ENCODE measurements at regions of chrX and their contacts with region 1.

Region 1: GRCh38 chrX:39149761-39150160 is 348.5 kb downstream of the MID1IP1 start:
- DNase-seq: peak; percentile 62 to 72 (median 71)
- H3K4me3 ChIP-seq: no peak overlapping the region
- H3K4me3 Mint-ChIP-seq: no peak overlapping the region
- H3K27ac ChIP-seq: no peak overlapping the region
- H3K27ac Mint-ChIP-seq: peak overlapping the region in 5 of 7 donors; percentile 2 to 88 (median 68)
- H3K4me1 ChIP-seq: peaks cover 22 to 24% of the 10 kb centered on the region in 2 donors
- H3K4me1 Mint-ChIP-seq: peaks cover 27% of the 10 kb centered on the region
- H3K27me3 ChIP-seq: no peaks in the 10 kb centered on the region
- H3K27me3 Mint-ChIP-seq: peaks cover 0 to 6% (median 3%) of the 10 kb centered on the region in 3 donors
- CTCF ChIP-seq: peak; percentile 73

Region 2: DNA sequence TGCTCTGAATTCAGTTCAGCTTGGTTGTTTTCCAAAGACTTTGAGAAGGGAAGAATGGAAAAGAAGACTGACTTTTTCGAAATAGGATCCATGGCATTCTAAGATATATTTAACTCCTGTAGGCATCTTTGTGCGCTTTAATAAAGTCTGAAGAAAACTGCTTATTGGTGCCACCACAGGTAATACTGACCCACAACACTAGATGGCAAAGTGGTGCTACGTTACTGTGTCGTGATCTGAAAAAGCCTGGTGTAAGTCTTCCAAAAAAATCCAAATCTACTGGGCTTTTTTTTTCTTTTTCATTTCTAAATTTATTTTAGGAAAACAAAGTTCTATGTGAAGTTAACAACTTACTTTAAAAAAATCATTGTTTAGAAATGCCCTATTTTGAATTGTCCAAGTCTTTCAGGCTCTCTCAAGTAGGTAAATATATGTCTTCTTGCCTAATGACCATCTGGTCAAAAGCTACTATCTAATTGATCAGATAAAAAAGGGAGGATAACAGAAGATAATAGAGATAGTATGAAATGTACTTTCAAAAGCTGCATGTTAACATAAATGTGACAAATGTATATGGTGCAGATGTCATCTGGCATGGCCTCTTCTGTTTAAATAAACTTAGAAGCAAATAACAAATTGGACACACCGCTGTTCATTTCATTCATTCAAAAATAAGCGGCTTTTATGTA is 395.5 kb before region 1 on chrX:
- intact Hi-C with region 1: loop called (anchors 5 to 10 kb)
- DNase-seq: peak; percentile 12 to 37 (median 29)
- H3K4me3 ChIP-seq: no peak overlapping the region
- H3K4me3 Mint-ChIP-seq: no peak overlapping the region
- H3K27ac ChIP-seq: no peak overlapping the region
- H3K27ac Mint-ChIP-seq: no peak overlapping the region
- H3K4me1 ChIP-seq: no peaks in the 10 kb centered on the region
- H3K4me1 Mint-ChIP-seq: peaks cover 2% of the 10 kb centered on the region
- H3K27me3 ChIP-seq: no peaks in the 10 kb centered on the region
- H3K27me3 Mint-ChIP-seq: peaks cover 0 to 3% (median 0%) of the 10 kb centered on the region in 3 donors
- CTCF ChIP-seq: peak; percentile 64

Region 3: DNA sequence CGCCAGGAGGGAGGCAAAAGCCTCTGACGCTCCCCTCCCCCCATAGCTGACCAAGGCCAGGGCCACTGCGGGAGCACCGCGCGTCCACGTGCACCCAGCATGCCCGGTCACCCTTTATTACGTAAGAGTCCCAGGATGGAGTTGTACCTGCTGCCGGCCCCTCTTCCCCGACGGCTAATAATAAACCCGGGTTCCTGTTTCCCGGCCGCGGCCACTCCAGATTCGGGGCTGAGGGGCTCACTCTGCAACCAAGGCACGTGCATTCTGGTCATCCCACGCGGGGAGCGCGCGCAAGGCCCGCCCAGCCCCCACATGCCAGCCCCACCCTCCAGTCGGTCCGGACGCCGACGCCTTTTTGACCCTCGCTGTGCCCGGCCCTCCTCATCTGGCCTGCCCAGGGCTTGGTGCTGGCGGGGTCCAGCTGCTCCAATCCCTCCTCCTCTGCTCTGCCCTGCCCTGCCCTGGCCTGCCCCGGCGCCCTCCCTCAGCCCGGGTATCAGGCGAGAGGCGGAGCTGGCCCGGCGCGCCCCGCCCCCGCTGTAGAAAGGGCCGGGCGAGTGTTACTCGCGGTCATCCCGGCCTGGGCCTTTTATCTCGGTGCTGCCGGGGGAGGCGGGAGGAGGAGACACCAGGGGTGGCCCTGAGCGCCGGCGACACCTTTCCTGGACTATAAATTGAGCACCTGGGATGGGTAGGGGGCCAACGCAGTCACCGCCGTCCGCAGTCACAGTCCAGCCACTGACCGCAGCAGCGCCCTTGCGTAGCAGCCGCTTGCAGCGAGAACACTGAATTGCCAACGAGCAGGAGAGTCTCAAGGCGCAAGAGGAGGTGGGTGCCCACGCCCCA is 346.0 kb before region 1 on chrX:
- intact Hi-C with region 1: loop called in 1 of 2 experiments (anchors 5 kb)
- DNase-seq: peak; percentile 63 to 86 (median 83)
- H3K4me3 ChIP-seq: peak overlapping the region; percentile 60 to 91 (median 88)
- H3K4me3 Mint-ChIP-seq: peak overlapping the region; percentile 88 to 93
- H3K27ac ChIP-seq: peak overlapping the region; percentile 79 to 89
- H3K27ac Mint-ChIP-seq: peak overlapping the region; percentile 88 to 98 (median 96)
- H3K4me1 ChIP-seq: peaks cover 37 to 41% of the 10 kb centered on the region in 2 donors
- H3K4me1 Mint-ChIP-seq: peaks cover 35% of the 10 kb centered on the region
- H3K27me3 ChIP-seq: no peaks in the 10 kb centered on the region
- H3K27me3 Mint-ChIP-seq: peaks cover 0 to 17% (median 0%) of the 10 kb centered on the region in 3 donors
- CTCF ChIP-seq: no peak

Region 4: GRCh38 chrX:38879631-38880220 is 270.0 kb before region 1 on chrX:
- intact Hi-C with region 1: loop called in 1 of 2 experiments (anchors 10 kb)
- DNase-seq: peak in 1 of 3 donors; percentile 13
- H3K4me3 ChIP-seq: peak overlapping the region in 1 of 3 experiments; percentile 61
- H3K4me3 Mint-ChIP-seq: peak overlapping the region in 1 of 2 donors; percentile 83
- H3K27ac ChIP-seq: peak overlapping the region in 1 of 2 donors; percentile 79
- H3K27ac Mint-ChIP-seq: peak overlapping the region; percentile 77 to 92 (median 83)
- H3K4me1 ChIP-seq: peaks cover 28 to 29% of the 10 kb centered on the region in 2 donors
- H3K4me1 Mint-ChIP-seq: peaks cover 22% of the 10 kb centered on the region
- H3K27me3 ChIP-seq: no peaks in the 10 kb centered on the region
- H3K27me3 Mint-ChIP-seq: peaks cover 0 to 2% (median 0%) of the 10 kb centered on the region in 3 donors
- CTCF ChIP-seq: no peak

Region 5: DNA sequence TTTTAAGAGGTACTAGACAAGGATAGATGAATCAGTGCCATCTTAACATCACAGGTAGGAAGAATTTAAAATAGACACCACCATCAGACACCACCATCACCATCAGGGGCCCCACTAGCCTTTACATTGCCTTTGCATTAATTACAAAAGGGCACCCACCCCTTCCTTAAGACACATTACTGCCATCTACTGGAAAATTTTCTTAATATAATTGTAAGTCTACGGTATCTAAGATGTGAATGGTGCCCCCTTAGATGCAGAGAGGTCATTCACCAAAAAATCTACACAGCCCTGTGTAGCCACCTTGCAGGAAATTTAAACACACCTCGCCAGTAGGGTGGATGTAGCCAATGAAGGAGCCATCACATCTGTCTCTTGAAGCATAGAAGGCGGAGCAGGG is 164.4 kb before region 1 on chrX:
- intact Hi-C with region 1: loop called in 1 of 2 experiments (anchors 10 kb)
- DNase-seq: peak in 2 of 3 donors; percentile 7 to 21
- H3K4me3 ChIP-seq: no peak overlapping the region
- H3K4me3 Mint-ChIP-seq: no peak overlapping the region
- H3K27ac ChIP-seq: no peak overlapping the region
- H3K27ac Mint-ChIP-seq: peak overlapping the region in 1 of 7 donors; percentile 47
- H3K4me1 ChIP-seq: peaks cover 22 to 27% of the 10 kb centered on the region in 2 donors
- H3K4me1 Mint-ChIP-seq: peaks cover 24% of the 10 kb centered on the region
- H3K27me3 ChIP-seq: peaks cover 0 to 2% of the 10 kb centered on the region in 2 donors
- H3K27me3 Mint-ChIP-seq: peaks cover 0 to 2% (median 1%) of the 10 kb centered on the region in 3 donors
- CTCF ChIP-seq: peak; percentile 42

Region 6: GRCh38 chrX:39020051-39020669 is 129.6 kb before region 1 on chrX:
- intact Hi-C with region 1: loop called in 1 of 2 experiments (anchors 10 kb)
- DNase-seq: peak in 1 of 3 donors; percentile 2
- H3K4me3 ChIP-seq: no peak overlapping the region
- H3K4me3 Mint-ChIP-seq: no peak overlapping the region
- H3K27ac ChIP-seq: no peak overlapping the region
- H3K27ac Mint-ChIP-seq: peak overlapping the region in 1 of 7 donors; percentile 4
- H3K4me1 ChIP-seq: peaks cover 11 to 12% of the 10 kb centered on the region in 2 donors
- H3K4me1 Mint-ChIP-seq: peaks cover 11% of the 10 kb centered on the region
- H3K27me3 ChIP-seq: no peaks in the 10 kb centered on the region
- H3K27me3 Mint-ChIP-seq: peaks cover 0 to 2% (median 0%) of the 10 kb centered on the region in 3 donors
- CTCF ChIP-seq: no peak

Region 7: DNA sequence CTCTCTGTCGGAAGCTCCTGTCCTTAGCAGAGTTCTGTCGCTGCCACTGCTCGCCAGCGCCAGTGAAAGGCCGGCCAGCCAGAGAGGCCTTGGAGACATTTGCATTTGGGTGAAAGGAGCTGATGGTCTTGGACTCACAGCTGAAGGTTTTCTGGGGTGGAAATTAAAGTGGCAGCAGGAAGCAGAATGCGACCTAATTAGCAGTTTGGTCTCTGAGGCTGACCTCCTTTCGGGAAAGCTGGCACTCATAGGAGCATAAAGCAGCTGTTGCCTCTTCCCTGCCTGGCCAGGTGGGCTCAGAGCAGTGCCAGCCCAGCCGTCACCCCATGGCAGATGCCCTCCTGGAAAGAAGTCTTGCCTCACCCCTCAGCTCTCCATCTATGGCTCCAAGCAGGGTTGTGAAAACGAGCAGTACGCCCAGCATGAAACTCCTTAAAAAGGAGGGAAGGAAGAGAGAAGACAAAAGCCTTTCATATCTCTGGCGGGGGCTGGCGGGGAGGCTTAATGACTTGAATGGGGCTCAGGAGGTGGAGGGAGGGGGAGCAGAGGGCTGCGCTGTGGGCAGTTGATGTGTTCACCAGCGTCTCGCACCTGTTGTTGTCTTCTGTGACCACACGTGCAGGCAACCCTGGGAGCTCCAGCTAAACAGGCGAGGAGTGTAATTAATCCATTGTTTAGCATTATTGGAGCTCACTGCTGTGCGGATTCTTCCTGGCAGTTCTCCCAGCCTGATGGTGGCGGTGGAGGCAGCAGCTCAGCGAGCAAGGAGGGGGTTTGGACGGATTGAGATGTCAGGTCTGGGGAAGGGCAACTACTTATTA is 84.5 kb before region 1 on chrX:
- intact Hi-C with region 1: loop called (anchors 10 kb)
- DNase-seq: no peak
- H3K4me3 ChIP-seq: no peak overlapping the region
- H3K4me3 Mint-ChIP-seq: no peak overlapping the region
- H3K27ac ChIP-seq: no peak overlapping the region
- H3K27ac Mint-ChIP-seq: peak overlapping the region in 2 of 7 donors; percentile 21 to 35
- H3K4me1 ChIP-seq: peaks cover 22 to 23% of the 10 kb centered on the region in 2 donors
- H3K4me1 Mint-ChIP-seq: peaks cover 26% of the 10 kb centered on the region
- H3K27me3 ChIP-seq: no peaks in the 10 kb centered on the region
- H3K27me3 Mint-ChIP-seq: peaks cover 0 to 7% (median 0%) of the 10 kb centered on the region in 3 donors
- CTCF ChIP-seq: no peak

Region 8: DNA sequence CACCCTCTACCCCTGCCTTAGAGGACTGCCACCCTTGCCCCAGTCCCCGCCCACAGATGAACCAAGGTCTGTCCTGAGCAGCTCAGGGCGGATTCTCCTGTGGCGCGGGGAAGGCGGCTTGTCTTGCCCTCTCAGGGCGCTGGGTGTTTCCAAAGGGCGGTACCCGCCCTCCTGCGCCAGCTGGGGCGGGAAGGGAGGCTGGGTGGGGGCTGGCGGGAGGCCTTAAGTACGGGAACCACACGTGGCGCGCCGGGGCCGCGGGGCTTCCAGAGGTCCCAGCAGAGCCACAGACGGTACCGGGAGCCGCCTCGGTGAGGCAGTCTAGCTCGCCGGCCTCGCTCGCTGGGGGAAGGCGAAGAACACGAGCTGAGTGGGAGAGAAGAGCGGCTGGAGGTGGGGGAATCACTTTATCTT is 12.6 kb after region 1 on chrX:
- intact Hi-C with region 1: no loop called
- DNase-seq: peak in 1 of 3 donors; percentile 43
- H3K4me3 ChIP-seq: peak overlapping the region in 1 of 3 experiments; percentile 36
- H3K4me3 Mint-ChIP-seq: peak overlapping the region; percentile 41 to 77
- H3K27ac ChIP-seq: no peak overlapping the region
- H3K27ac Mint-ChIP-seq: peak overlapping the region in 2 of 7 donors; percentile 21 to 46
- H3K4me1 ChIP-seq: peaks cover 27 to 32% of the 10 kb centered on the region in 2 donors
- H3K4me1 Mint-ChIP-seq: peaks cover 32% of the 10 kb centered on the region
- H3K27me3 ChIP-seq: peaks cover 0 to 2% of the 10 kb centered on the region in 2 donors
- H3K27me3 Mint-ChIP-seq: peaks cover 11 to 28% (median 25%) of the 10 kb centered on the region in 3 donors
- CTCF ChIP-seq: peak; percentile 29

Measured in CD14-positive monocyte (primary cell).